ENCODE measurements at regions of chr10 and their contacts with region 1.

Region 1: DNA sequence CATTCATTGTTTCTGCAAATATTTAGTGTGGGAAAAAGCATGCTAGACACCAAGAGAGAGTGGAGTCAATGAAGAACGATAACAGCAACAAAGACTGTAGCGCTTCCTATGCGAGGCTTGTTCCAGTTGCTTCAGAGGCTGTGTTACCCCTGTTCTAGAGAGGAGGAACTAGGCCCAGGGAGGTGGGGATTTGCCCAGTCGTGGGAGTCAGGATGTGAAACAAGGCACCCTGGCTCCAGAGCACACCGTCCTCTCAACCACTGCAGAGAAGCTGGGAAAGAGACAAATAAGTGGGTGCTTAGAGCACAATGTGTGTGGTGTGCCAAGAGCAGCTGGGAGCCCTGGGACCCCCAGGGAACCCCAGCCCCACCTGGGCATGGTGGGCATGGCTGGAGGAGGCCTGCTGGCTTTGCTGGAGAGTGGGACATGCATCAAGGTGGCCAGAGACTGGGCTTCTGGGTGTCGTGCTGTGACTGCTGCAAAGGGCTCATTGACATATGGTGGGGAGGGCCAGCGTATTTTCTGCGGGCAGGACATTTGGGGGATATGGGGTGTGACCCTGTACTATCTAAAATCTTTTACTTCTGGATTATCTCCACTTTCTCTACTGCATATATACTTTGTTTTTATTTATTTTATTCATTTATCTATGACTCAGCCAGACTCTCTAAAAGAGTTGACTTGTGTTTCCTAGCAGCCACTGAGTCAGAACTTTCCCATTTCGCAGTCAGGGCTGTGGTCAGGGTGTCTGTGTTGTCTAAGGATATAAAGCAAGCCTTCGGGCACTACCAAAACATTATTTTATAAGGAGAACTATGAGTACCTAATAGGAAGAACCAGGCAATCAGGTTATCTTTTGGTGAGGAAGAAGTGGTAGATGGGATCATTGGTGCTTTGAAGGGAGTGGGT is 95.4 kb downstream of the TCF7L2 start:
- DNase-seq: peak; percentile 95
- H3K4me3 ChIP-seq: no peak overlapping the region
- H3K27ac ChIP-seq: peak overlapping the region; percentile 85
- H3K4me1 ChIP-seq: peaks cover 46% of the 10 kb centered on the region
- H3K27me3 ChIP-seq: no peaks in the 10 kb centered on the region
- CTCF ChIP-seq: no peak

Region 2: GRCh38 chr10:113087165-113088029 is 42.0 kb after region 1 on chr10:
- CTCF ChIA-PET with region 1: no interaction called
- dilution Hi-C with region 1: no loop called
- in situ Hi-C with region 1: no loop called
- intact Hi-C with region 1: loop called (anchors 5 kb)
- DNase-seq: peak; percentile 97
- H3K4me3 ChIP-seq: no peak overlapping the region
- H3K27ac ChIP-seq: peak overlapping the region; percentile 60
- H3K4me1 ChIP-seq: peaks cover 14% of the 10 kb centered on the region
- H3K27me3 ChIP-seq: no peaks in the 10 kb centered on the region
- CTCF ChIP-seq: no peak

Region 3: GRCh38 chr10:113252650-113253618 is 207.5 kb after region 1 on chr10:
- CTCF ChIA-PET with region 1: no interaction called
- dilution Hi-C with region 1: no loop called
- in situ Hi-C with region 1: no loop called
- intact Hi-C with region 1: no loop called
- DNase-seq: no peak
- H3K4me3 ChIP-seq: no peak overlapping the region
- H3K27ac ChIP-seq: no peak overlapping the region
- H3K4me1 ChIP-seq: no peaks in the 10 kb centered on the region
- H3K27me3 ChIP-seq: peaks cover 6% of the 10 kb centered on the region
- CTCF ChIP-seq: no peak